ENCODE measurements at regions of chr20 and their contacts with region 1.

Region 1: GRCh38 chr20:24157213-24157612 is 168.6 kb upstream of the GGTLC1 start:
- DNase-seq: peak; percentile 71 to 76
- ATAC-seq: peak; percentile 93 to 98 (median 95)
- H3K4me3 ChIP-seq: no peak overlapping the region
- H3K4me3 Mint-ChIP-seq: peak overlapping the region; percentile 61
- H3K27ac ChIP-seq: peak overlapping the region; percentile 66
- H3K27ac Mint-ChIP-seq: peak overlapping the region; percentile 81 to 94
- H3K4me1 ChIP-seq: peaks cover 18% of the 10 kb centered on the region
- H3K4me1 Mint-ChIP-seq: peaks cover 54 to 67% of the 10 kb centered on the region in 2 donors
- H3K27me3 ChIP-seq: no peaks in the 10 kb centered on the region
- H3K27me3 Mint-ChIP-seq: peaks cover 0 to 11% of the 10 kb centered on the region in 2 donors
- CTCF ChIP-seq: no peak

Region 2: DNA sequence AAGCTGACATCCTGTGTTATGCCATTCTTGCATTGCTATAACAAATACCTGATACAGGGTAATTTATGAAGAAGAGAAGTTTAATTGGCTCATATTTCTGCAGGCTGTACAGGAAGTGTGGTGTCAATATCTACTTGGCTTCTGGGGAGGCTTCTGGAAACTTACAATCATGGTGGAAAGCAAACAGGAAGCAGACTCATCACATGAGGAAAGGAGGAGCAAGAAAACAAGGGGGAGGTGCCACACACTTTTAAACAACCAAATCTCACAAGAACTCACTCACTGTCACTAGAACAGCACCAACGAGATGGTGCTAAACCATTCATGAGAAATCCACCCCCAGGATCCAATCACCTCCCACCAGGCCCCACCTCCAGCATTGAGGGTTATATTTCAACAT is 25.5 kb before region 1 on chr20:
- intact Hi-C with region 1: loop called (anchors 2 kb)
- DNase-seq: no peak
- ATAC-seq: peak in 2 of 3 donors; percentile 70 to 77
- H3K4me3 ChIP-seq: no peak overlapping the region
- H3K4me3 Mint-ChIP-seq: peak overlapping the region; percentile 47
- H3K27ac ChIP-seq: peak overlapping the region; percentile 8
- H3K27ac Mint-ChIP-seq: peak overlapping the region; percentile 64 to 95
- H3K4me1 ChIP-seq: peaks cover 34% of the 10 kb centered on the region
- H3K4me1 Mint-ChIP-seq: peaks cover 51 to 52% of the 10 kb centered on the region in 2 donors
- H3K27me3 ChIP-seq: no peaks in the 10 kb centered on the region
- H3K27me3 Mint-ChIP-seq: no peaks in the 10 kb centered on the region
- CTCF ChIP-seq: no peak

Measured in natural killer cell (primary cell).